Activated naive CD4-positive, alpha-beta T cell treated with anti-CD3 and anti-CD28 coated beads for 36 hours (primary cell): ENCODE measurements at regions of chr4 and their contacts with region 1.

Region 1: DNA sequence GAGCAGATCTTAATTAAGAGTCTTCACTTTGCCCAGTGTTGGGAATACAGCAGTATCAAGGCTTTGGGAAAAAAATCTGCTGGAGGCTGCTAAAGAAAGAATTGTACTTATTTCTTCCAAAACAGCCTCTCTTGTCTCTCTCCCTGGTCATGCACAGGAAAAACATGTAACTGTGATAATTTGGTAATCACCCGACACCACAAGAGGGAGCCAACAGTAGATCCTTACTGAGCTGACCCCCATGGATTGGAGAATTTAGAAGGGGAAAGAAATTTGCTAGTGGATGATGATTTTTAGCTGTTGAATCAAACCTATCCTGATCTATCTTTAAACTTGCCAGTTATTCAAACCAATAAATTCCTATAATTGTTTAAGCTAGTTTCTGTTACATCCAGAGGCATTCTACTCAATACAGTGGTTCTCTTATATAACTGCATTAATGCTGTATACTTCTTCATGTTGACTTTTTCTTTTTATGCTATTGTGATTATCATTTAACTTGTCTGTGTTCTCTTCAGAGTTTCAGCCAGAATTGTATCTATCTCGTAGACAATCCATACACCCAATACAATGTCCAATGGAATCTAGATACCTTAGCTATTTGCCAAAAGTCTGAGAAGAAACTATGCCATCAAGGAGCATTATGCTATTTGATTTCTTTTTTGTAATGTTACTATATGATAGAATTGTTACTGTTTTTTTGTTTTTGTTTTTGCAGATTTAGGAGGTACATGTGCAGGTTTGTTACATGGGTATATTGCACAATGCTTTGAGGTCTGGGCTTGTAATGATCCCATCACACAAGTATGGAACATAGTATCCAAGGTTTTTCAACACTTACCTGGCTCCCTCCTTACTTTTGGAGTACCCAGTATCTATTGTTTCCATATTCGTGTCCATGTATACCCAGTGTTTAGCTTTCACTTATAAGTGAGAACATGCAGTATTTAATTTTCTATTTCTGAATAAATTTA is 31.3 kb upstream of the ARHGEF38 start:
- DNase-seq: peak; percentile 38
- H3K4me3 Mint-ChIP-seq: no peak overlapping the region
- H3K27ac Mint-ChIP-seq: no peak overlapping the region
- H3K4me1 Mint-ChIP-seq: no peaks in the 10 kb centered on the region
- H3K27me3 Mint-ChIP-seq: peaks cover 10% of the 10 kb centered on the region

Region 2: DNA sequence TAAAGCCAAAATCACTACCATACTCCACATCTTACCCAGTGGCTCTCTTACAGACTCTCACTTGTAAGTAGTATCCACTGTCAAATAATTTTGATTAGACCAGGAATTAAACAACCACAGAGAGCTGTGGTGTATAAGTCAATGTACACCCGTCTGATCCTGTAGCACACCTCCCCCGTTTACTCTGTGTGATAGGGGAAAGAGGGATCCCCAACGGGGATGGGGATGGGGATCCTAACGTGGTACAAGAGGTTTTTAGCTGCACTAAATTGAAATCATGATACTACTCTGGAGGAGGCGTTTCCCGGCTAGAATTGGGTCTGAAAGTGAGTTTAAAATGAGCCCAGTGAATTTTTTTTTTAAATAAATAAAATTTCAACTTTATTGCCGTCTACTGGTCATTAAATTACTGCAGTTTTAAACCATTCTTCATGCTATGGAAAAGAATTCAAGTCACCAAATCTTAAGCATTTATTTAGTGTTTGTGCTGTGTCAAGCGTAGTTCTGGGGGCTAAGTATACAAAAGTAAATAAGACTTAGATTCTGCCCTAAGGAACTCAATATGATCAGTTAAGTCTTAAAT is 110.8 kb after region 1 on chr4:
- CTCF ChIA-PET with region 1: interaction called, 12 read pairs
- intact Hi-C with region 1: no loop called
- DNase-seq: no peak
- H3K4me3 Mint-ChIP-seq: no peak overlapping the region
- H3K27ac Mint-ChIP-seq: no peak overlapping the region
- H3K4me1 Mint-ChIP-seq: no peaks in the 10 kb centered on the region
- H3K27me3 Mint-ChIP-seq: peaks cover 10% of the 10 kb centered on the region

Region 3: GRCh38 chr4:105666693-105667092 is 145.6 kb after region 1 on chr4:
- CTCF ChIA-PET with region 1: no interaction called
- intact Hi-C with region 1: loop called (anchors 1 kb)
- DNase-seq: no peak
- H3K4me3 Mint-ChIP-seq: no peak overlapping the region
- H3K27ac Mint-ChIP-seq: no peak overlapping the region
- H3K4me1 Mint-ChIP-seq: no peaks in the 10 kb centered on the region
- H3K27me3 Mint-ChIP-seq: peaks cover 4% of the 10 kb centered on the region

Region 4: DNA sequence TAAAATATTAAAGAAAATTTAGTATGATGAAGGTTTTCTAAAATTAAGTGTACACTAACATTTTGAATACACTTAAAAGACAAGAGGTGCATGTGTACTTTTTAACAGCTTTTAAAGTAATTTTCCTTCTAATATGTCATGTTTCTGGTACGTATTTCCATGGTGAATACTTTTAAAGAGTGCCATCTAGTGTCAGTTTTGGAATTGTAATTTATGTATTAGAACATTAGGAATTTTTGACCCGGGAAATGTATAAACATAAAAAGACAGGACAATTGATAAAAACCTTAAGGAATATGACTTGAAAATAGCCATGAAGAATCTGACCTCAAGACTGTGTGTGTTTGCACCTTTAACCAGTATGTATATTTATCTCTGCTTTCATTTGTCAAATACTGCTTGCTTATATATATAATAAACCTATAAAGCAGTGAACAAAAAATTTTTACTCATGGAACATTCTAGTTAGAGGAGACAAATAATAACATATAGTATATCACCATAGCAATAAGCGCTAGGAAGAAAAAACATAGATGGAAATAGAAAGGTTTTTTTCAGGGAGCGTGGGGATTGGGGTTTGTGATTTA is 194.7 kb after region 1 on chr4:
- CTCF ChIA-PET with region 1: interaction called, 4 read pairs
- intact Hi-C with region 1: loop called (anchors 1 kb)
- DNase-seq: no peak
- H3K4me3 Mint-ChIP-seq: no peak overlapping the region
- H3K27ac Mint-ChIP-seq: no peak overlapping the region
- H3K4me1 Mint-ChIP-seq: peaks cover 2% of the 10 kb centered on the region
- H3K27me3 Mint-ChIP-seq: no peaks in the 10 kb centered on the region

Region 5: GRCh38 chr4:106201373-106201772 is 680.3 kb after region 1 on chr4:
- CTCF ChIA-PET with region 1: no interaction called
- intact Hi-C with region 1: loop called (anchors 2 kb)
- DNase-seq: no peak
- H3K4me3 Mint-ChIP-seq: no peak overlapping the region
- H3K27ac Mint-ChIP-seq: no peak overlapping the region
- H3K4me1 Mint-ChIP-seq: no peaks in the 10 kb centered on the region
- H3K27me3 Mint-ChIP-seq: no peaks in the 10 kb centered on the region